B cell (primary cell): ENCODE measurements at regions of chr2 and their contacts with region 1.

Region 1: DNA sequence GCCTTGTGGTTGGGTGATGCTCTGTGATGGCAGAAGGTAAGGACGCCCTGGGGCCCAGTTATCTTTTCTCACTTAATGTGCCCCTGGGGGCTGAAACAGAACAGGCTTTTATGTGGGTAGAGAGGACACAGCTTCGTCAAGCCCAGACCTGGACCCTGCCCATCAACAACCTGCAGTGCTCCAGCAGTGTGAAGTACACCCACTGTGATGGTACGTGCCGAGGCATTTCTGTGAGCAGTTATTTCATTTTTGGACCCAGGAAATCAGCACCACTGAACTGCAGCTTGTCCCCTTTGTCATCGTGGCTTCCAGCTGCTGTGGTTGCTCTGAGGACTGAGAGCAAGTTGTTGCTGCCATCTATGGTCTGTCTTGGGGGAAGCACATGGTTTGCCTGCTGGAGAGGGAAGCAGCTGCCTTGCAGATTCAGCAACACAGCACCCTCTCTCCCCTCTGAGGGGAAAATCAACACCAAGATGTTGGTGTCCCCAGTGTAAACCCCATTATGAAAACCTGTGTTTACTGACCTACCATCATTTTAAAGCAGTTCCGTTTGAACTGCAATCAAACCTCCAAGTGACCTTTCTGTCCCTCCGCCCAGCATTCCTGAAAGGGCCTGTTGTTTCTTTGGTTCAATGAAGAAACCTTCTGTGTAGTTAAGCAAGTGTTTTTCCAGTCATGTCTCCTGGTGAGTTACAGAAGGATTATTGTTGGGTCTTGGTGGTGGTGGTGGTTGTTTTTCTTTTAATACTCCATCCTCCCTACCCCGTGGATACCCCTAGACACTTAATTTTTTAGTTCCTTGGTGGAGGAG is 158.2 kb downstream of the MGAT5 start:
- DNase-seq: peak; percentile 89
- ATAC-seq: peak; percentile 93
- H3K4me3 ChIP-seq: peak overlapping the region in 2 of 5 experiments; percentile 6 to 18
- H3K4me3 Mint-ChIP-seq: peak overlapping the region; percentile 59
- H3K27ac ChIP-seq: peak overlapping the region; percentile 64 to 74
- H3K27ac Mint-ChIP-seq: peak overlapping the region; percentile 86
- H3K4me1 ChIP-seq: peaks cover 45 to 50% of the 10 kb centered on the region in 2 donors
- H3K4me1 Mint-ChIP-seq: peaks cover 49% of the 10 kb centered on the region
- H3K27me3 ChIP-seq: no peaks in the 10 kb centered on the region
- H3K27me3 Mint-ChIP-seq: no peaks in the 10 kb centered on the region
- CTCF ChIP-seq: peak; percentile 81

Region 2: GRCh38 chr2:133434962-133435668 is 976.9 kb before region 1 on chr2:
- CTCF ChIA-PET with region 1: no interaction called
- POLR2A ChIA-PET with region 1: no interaction called
- intact Hi-C with region 1: no loop called
- DNase-seq: no peak
- ATAC-seq: no peak
- H3K4me3 ChIP-seq: no peak overlapping the region
- H3K4me3 Mint-ChIP-seq: no peak overlapping the region
- H3K27ac ChIP-seq: no peak overlapping the region
- H3K27ac Mint-ChIP-seq: no peak overlapping the region
- H3K4me1 ChIP-seq: no peaks in the 10 kb centered on the region
- H3K4me1 Mint-ChIP-seq: no peaks in the 10 kb centered on the region
- H3K27me3 ChIP-seq: no peaks in the 10 kb centered on the region
- H3K27me3 Mint-ChIP-seq: no peaks in the 10 kb centered on the region
- CTCF ChIP-seq: no peak

Region 3: DNA sequence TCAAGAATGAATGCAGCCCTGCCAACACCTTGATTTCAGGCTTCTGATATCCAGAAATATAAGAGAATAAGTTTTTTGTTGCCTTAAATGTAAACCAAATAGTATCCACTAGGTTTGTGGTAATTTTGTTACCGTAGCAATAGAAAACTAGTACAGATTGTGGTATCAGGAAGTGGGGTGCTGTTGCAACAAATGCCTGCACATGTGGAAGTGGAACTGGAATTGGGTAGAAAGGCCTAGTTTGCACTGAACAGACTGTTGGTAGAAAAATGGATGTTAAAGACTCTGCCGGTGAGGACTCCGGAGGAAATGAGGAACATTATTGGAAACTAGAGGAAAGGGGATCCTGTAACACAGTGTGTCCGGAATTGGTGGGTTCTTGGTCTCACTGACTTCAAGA is 303.9 kb before region 1 on chr2:
- CTCF ChIA-PET with region 1: interaction called, 13 read pairs
- POLR2A ChIA-PET with region 1: no interaction called
- intact Hi-C with region 1: no loop called
- DNase-seq: no peak
- ATAC-seq: no peak
- H3K4me3 ChIP-seq: no peak overlapping the region
- H3K4me3 Mint-ChIP-seq: no peak overlapping the region
- H3K27ac ChIP-seq: no peak overlapping the region
- H3K27ac Mint-ChIP-seq: no peak overlapping the region
- H3K4me1 ChIP-seq: no peaks in the 10 kb centered on the region
- H3K4me1 Mint-ChIP-seq: peaks cover 7% of the 10 kb centered on the region
- H3K27me3 ChIP-seq: no peaks in the 10 kb centered on the region
- H3K27me3 Mint-ChIP-seq: no peaks in the 10 kb centered on the region
- CTCF ChIP-seq: no peak

Region 4: GRCh38 chr2:134207564-134208209 is 204.3 kb before region 1 on chr2:
- CTCF ChIA-PET with region 1: interaction called, 53 read pairs
- POLR2A ChIA-PET with region 1: interaction called, 3 read pairs
- intact Hi-C with region 1: loop called (anchors 5 kb)
- DNase-seq: peak; percentile 68
- ATAC-seq: peak; percentile 82
- H3K4me3 ChIP-seq: no peak overlapping the region
- H3K4me3 Mint-ChIP-seq: no peak overlapping the region
- H3K27ac ChIP-seq: peak overlapping the region in 1 of 2 donors; percentile 64
- H3K27ac Mint-ChIP-seq: peak overlapping the region; percentile 69
- H3K4me1 ChIP-seq: peaks cover 49 to 53% of the 10 kb centered on the region in 2 donors
- H3K4me1 Mint-ChIP-seq: peaks cover 12% of the 10 kb centered on the region
- H3K27me3 ChIP-seq: no peaks in the 10 kb centered on the region
- H3K27me3 Mint-ChIP-seq: no peaks in the 10 kb centered on the region
- CTCF ChIP-seq: peak; percentile 75

Region 5: DNA sequence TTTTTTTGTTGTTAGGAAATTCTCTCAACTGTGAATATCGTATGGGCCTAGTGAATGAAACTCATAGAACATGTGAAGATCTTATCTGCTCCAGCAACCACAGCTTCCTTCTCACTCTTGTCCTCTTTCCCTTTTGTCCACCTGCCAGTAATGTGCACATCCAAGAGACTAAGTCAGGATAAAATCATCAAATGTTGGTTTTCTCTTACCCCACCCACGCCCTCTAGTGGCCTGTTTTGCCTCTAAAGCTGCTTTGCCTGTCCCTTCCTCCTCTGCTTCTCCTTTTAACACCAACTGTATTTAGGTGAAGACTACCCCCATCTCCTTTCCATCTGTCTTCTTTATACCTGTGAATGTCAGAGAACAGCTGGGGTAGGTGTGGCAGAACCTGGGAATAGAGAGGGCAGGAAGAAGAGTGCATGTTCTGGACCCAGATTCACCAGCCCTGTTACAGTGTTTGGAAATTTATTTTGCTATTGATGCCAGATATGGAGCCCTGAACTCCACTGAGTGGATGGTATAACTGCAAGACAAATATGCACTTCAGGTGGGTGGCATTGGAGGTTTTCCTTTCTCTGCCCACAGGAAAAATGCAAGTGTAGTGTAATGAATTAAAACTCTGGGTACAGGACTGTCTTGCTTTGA is 166.6 kb before region 1 on chr2:
- CTCF ChIA-PET with region 1: interaction called, 124 read pairs
- POLR2A ChIA-PET with region 1: interaction called, 3 read pairs
- intact Hi-C with region 1: loop called (anchors 1 kb)
- DNase-seq: peak; percentile 84
- ATAC-seq: peak; percentile 55
- H3K4me3 ChIP-seq: peak overlapping the region in 2 of 5 experiments; percentile 6 to 12
- H3K4me3 Mint-ChIP-seq: peak overlapping the region; percentile 76
- H3K27ac ChIP-seq: peak overlapping the region; percentile 50 to 83
- H3K27ac Mint-ChIP-seq: peak overlapping the region; percentile 85
- H3K4me1 ChIP-seq: peaks cover 87 to 92% of the 10 kb centered on the region in 2 donors
- H3K4me1 Mint-ChIP-seq: peaks cover 92% of the 10 kb centered on the region
- H3K27me3 ChIP-seq: no peaks in the 10 kb centered on the region
- H3K27me3 Mint-ChIP-seq: no peaks in the 10 kb centered on the region
- CTCF ChIP-seq: peak; percentile 80

Region 6: GRCh38 chr2:134282629-134283400 is 129.2 kb before region 1 on chr2:
- CTCF ChIA-PET with region 1: interaction called, 11 read pairs
- POLR2A ChIA-PET with region 1: no interaction called
- intact Hi-C with region 1: no loop called
- DNase-seq: peak; percentile 56
- ATAC-seq: peak; percentile 64
- H3K4me3 ChIP-seq: peak overlapping the region in 1 of 5 experiments; percentile 40
- H3K4me3 Mint-ChIP-seq: peak overlapping the region; percentile 77
- H3K27ac ChIP-seq: peak overlapping the region; percentile 56 to 80
- H3K27ac Mint-ChIP-seq: peak overlapping the region; percentile 88
- H3K4me1 ChIP-seq: peaks cover 95 to 100% of the 10 kb centered on the region in 2 donors
- H3K4me1 Mint-ChIP-seq: peaks cover 78% of the 10 kb centered on the region
- H3K27me3 ChIP-seq: no peaks in the 10 kb centered on the region
- H3K27me3 Mint-ChIP-seq: no peaks in the 10 kb centered on the region
- CTCF ChIP-seq: no peak

Region 7: DNA sequence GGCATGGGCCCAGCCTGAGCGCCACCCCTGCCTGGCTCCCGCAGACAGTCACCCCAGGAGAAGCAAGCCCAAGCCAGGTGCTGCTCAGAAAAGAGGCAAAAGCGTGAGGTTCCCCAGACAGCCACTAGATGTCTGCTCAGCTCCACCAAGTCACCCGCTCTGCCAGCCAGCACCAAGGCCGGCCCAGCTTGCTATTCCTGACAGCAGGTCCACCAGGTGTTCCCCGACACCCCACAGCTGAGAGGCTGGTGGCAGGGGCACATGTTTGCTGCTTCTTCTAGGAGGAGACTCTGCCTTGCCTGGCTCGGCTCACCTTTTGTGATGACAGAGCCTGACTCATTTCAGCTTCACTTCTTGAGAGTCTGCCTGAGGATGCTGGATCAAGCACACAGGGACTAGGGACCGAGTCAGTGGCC is 48.6 kb after region 1 on chr2:
- CTCF ChIA-PET with region 1: no interaction called
- POLR2A ChIA-PET with region 1: no interaction called
- intact Hi-C with region 1: no loop called
- DNase-seq: peak; percentile 59
- ATAC-seq: peak; percentile 76
- H3K4me3 ChIP-seq: no peak overlapping the region
- H3K4me3 Mint-ChIP-seq: no peak overlapping the region
- H3K27ac ChIP-seq: no peak overlapping the region
- H3K27ac Mint-ChIP-seq: peak overlapping the region; percentile 37
- H3K4me1 ChIP-seq: no peaks in the 10 kb centered on the region
- H3K4me1 Mint-ChIP-seq: peaks cover 3% of the 10 kb centered on the region
- H3K27me3 ChIP-seq: no peaks in the 10 kb centered on the region
- H3K27me3 Mint-ChIP-seq: no peaks in the 10 kb centered on the region
- CTCF ChIP-seq: peak; percentile 61

Region 8: GRCh38 chr2:134470561-134471168 is 58.6 kb after region 1 on chr2:
- CTCF ChIA-PET with region 1: no interaction called
- POLR2A ChIA-PET with region 1: no interaction called
- intact Hi-C with region 1: no loop called
- DNase-seq: no peak
- ATAC-seq: no peak
- H3K4me3 ChIP-seq: no peak overlapping the region
- H3K4me3 Mint-ChIP-seq: no peak overlapping the region
- H3K27ac ChIP-seq: no peak overlapping the region
- H3K27ac Mint-ChIP-seq: no peak overlapping the region
- H3K4me1 ChIP-seq: no peaks in the 10 kb centered on the region
- H3K4me1 Mint-ChIP-seq: no peaks in the 10 kb centered on the region
- H3K27me3 ChIP-seq: no peaks in the 10 kb centered on the region
- H3K27me3 Mint-ChIP-seq: no peaks in the 10 kb centered on the region
- CTCF ChIP-seq: no peak

Region 9: GRCh38 chr2:134586326-134586965 is 174.4 kb after region 1 on chr2:
- CTCF ChIA-PET with region 1: no interaction called
- POLR2A ChIA-PET with region 1: no interaction called
- intact Hi-C with region 1: no loop called
- DNase-seq: peak; percentile 20
- ATAC-seq: peak; percentile 44
- H3K4me3 ChIP-seq: no peak overlapping the region
- H3K4me3 Mint-ChIP-seq: no peak overlapping the region
- H3K27ac ChIP-seq: no peak overlapping the region
- H3K27ac Mint-ChIP-seq: peak overlapping the region; percentile 66
- H3K4me1 ChIP-seq: peaks cover 11 to 21% of the 10 kb centered on the region in 2 donors
- H3K4me1 Mint-ChIP-seq: peaks cover 38% of the 10 kb centered on the region
- H3K27me3 ChIP-seq: no peaks in the 10 kb centered on the region
- H3K27me3 Mint-ChIP-seq: no peaks in the 10 kb centered on the region
- CTCF ChIP-seq: no peak